ENCODE measurements at regions of chr13 and their contacts with region 1.

Region 1: GRCh38 chr13:77026818-77027585 is at the start of gene FBXL3:
- DNase-seq: peak; percentile 94
- H3K4me3 Mint-ChIP-seq: peak within 1 kb of the TSS; percentile 99
- H3K27ac Mint-ChIP-seq: peak within 1 kb of the TSS; percentile 95
- H3K4me1 Mint-ChIP-seq: peaks cover 48% of the 10 kb centered on the region
- H3K27me3 Mint-ChIP-seq: no peaks in the 10 kb centered on the region
- total RNA-seq, gene FBXL3: 36.0 and 41.6 TPM in 2 replicates

Region 2: DNA sequence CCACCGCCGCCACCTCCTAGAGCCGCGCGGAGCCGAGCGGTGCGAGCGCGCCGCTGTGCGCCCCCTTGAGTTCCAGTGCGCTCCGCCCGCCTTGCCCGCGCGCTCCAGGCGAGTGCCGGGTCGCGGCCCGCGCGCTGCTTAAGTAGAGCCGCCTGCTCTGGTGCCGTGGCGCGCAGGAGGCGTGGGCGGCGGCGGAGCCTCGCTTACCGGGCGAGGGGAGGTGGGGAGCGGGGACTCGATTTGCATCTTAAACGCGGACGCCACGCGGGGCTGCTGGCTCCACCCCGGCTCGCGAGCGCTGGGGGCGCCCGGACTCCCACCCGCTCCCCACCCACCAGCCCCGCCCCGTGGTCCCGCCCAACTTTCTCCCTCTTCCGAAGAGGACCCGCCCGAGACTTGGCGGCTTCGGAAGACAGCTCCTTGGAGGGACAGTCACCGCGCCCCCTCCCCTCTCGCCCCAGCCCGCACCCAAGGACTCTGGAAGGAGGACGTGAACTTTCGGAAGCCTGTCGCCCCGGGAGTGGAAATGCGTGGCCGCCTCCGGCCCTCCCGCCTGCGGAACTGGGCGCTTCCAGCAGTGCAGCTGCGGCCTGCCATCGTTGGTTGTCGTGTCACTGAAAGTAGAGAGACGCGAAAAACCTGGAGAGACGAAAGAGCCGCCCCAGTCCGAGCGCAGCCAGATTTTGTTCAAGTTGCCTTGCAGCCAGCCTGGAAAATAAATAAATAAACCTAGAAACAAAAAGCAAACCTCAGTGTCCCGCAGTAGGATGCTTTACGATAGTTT is 140.5 kb before region 1 on chr13 and contains the start of gene KCTD12:
- intact Hi-C with region 1: no loop called
- DNase-seq: peak; percentile 93
- H3K4me3 Mint-ChIP-seq: peak within 1 kb of the TSS; percentile 89
- H3K27ac Mint-ChIP-seq: peak within 1 kb of the TSS; percentile 87
- H3K4me1 Mint-ChIP-seq: peaks cover 26% of the 10 kb centered on the region
- H3K27me3 Mint-ChIP-seq: peaks cover 40% of the 10 kb centered on the region
- total RNA-seq, gene KCTD12: 11.8 and 12.9 TPM in 2 replicates

Region 3: GRCh38 chr13:76980075-76980718 is 46.8 kb before region 1 on chr13:
- intact Hi-C with region 1: loop called (anchors 1 kb)
- DNase-seq: peak; percentile 95
- H3K4me3 Mint-ChIP-seq: peak overlapping the region; percentile 78
- H3K27ac Mint-ChIP-seq: no peak overlapping the region
- H3K4me1 Mint-ChIP-seq: peaks cover 6% of the 10 kb centered on the region
- H3K27me3 Mint-ChIP-seq: peaks cover 47% of the 10 kb centered on the region

Region 4: DNA sequence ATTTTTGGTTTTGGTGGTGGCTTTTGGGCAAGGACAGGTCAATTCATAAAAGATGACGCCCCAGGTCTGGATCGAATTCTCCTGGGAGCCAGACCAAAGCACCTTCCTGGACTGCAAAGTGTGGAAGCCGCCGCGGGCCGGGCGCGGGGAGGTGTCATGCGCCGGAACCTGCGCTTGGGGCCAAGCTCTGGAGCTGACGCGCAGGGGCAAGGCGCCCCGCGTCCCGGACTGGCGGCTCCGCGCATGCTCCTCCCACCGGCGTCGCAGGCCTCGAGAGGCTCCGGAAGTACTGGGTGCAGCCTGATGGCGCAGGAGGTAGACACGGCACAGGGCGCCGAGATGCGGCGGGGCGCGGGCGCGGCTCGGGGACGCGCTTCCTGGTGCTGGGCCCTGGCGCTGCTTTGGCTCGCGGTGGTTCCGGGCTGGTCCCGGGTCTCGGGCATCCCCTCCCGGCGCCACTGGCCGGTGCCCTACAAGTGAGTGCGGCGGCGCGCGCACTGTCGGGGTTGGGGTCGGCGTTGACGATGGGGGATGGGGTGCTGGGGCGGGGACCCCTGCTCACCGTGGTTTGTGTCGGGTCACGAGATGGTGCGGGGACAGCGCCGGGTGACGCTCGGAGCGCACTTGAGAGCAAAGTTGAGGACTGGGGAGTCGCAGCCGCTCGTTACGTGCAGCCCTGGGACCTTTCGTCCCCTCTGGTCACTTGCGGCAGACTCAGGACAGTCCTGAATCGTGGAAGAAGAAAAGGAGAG is 35.0 kb before region 1 on chr13 and contains the start of gene CLN5:
- intact Hi-C with region 1: loop called (anchors 1 kb)
- DNase-seq: peak; percentile 99
- H3K4me3 Mint-ChIP-seq: peak within 1 kb of the TSS; percentile 96
- H3K27ac Mint-ChIP-seq: peak within 1 kb of the TSS; percentile 95
- H3K4me1 Mint-ChIP-seq: peaks cover 26% of the 10 kb centered on the region
- H3K27me3 Mint-ChIP-seq: peaks cover 5% of the 10 kb centered on the region
- total RNA-seq, gene CLN5: 15.6 and 15.7 TPM in 2 replicates

Region 5: GRCh38 chr13:77009011-77009410 is 18.0 kb before region 1 on chr13:
- intact Hi-C with region 1: loop called (anchors 1 kb)
- DNase-seq: no peak
- H3K4me3 Mint-ChIP-seq: no peak overlapping the region
- H3K27ac Mint-ChIP-seq: no peak overlapping the region
- H3K4me1 Mint-ChIP-seq: peaks cover 19% of the 10 kb centered on the region
- H3K27me3 Mint-ChIP-seq: no peaks in the 10 kb centered on the region

Region 6: DNA sequence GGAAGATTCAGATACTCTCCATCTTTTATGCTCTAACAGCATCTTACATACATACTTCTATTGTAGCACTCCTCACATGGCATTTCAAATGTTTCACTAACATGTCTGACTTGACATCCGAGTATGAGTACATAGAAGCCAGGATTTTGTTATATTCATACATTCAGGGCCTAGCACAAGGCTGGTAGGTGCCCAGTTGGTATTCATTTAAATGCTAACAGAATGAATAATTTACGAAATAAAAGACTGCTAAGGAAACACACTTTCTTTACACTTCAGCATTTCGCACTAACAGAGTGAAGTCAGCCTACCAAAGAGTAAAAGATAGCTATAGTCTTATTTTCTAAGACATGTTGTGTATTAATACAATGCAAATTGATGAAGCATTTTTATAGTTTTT is 67.8 kb after region 1 on chr13:
- intact Hi-C with region 1: no loop called
- DNase-seq: no peak
- H3K4me3 Mint-ChIP-seq: no peak overlapping the region
- H3K27ac Mint-ChIP-seq: no peak overlapping the region
- H3K4me1 Mint-ChIP-seq: no peaks in the 10 kb centered on the region
- H3K27me3 Mint-ChIP-seq: no peaks in the 10 kb centered on the region

Region 7: DNA sequence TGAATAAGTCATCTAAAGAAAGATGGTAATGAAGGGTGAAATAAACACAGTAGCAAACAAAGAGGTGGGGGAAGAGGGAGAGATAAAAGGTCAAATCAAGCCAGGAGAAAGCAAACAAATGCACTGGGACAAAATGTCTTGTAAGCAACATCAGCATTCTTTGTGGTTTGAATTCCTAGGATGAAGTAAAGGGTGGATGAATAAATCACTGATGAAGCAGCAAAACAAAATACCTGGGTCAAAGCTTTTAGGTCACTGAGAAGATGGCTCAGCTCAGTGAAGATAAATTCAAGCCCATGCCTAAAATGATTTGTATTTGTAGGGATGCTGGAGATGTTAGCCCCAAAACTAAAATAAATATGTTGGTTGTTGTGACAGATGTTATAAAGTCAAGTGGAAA is 86.5 kb after region 1 on chr13:
- intact Hi-C with region 1: no loop called
- DNase-seq: no peak
- H3K4me3 Mint-ChIP-seq: no peak overlapping the region
- H3K27ac Mint-ChIP-seq: no peak overlapping the region
- H3K4me1 Mint-ChIP-seq: no peaks in the 10 kb centered on the region
- H3K27me3 Mint-ChIP-seq: no peaks in the 10 kb centered on the region

Region 8: GRCh38 chr13:77316430-77316829 is 289.4 kb after region 1 on chr13:
- intact Hi-C with region 1: no loop called
- DNase-seq: no peak
- H3K4me3 Mint-ChIP-seq: no peak overlapping the region
- H3K27ac Mint-ChIP-seq: no peak overlapping the region
- H3K4me1 Mint-ChIP-seq: peaks cover 54% of the 10 kb centered on the region
- H3K27me3 Mint-ChIP-seq: no peaks in the 10 kb centered on the region

Region 9: GRCh38 chr13:77697217-77698103 is 670.5 kb after region 1 on chr13 and contains the start of gene SLAIN1:
- intact Hi-C with region 1: loop called (anchors 5 kb)
- DNase-seq: peak; percentile 94
- H3K4me3 Mint-ChIP-seq: peak within 1 kb of the TSS; percentile 99
- H3K27ac Mint-ChIP-seq: peak within 1 kb of the TSS; percentile 68
- H3K4me1 Mint-ChIP-seq: peaks cover 31% of the 10 kb centered on the region
- H3K27me3 Mint-ChIP-seq: peaks cover 35% of the 10 kb centered on the region
- total RNA-seq, gene SLAIN1: 28.7 and 29.1 TPM in 2 replicates